Dorsolateral prefrontal cortex (tissue), 120 donors: ENCODE measurements at regions of chr19 and their contacts with region 1.

Region 1: DNA sequence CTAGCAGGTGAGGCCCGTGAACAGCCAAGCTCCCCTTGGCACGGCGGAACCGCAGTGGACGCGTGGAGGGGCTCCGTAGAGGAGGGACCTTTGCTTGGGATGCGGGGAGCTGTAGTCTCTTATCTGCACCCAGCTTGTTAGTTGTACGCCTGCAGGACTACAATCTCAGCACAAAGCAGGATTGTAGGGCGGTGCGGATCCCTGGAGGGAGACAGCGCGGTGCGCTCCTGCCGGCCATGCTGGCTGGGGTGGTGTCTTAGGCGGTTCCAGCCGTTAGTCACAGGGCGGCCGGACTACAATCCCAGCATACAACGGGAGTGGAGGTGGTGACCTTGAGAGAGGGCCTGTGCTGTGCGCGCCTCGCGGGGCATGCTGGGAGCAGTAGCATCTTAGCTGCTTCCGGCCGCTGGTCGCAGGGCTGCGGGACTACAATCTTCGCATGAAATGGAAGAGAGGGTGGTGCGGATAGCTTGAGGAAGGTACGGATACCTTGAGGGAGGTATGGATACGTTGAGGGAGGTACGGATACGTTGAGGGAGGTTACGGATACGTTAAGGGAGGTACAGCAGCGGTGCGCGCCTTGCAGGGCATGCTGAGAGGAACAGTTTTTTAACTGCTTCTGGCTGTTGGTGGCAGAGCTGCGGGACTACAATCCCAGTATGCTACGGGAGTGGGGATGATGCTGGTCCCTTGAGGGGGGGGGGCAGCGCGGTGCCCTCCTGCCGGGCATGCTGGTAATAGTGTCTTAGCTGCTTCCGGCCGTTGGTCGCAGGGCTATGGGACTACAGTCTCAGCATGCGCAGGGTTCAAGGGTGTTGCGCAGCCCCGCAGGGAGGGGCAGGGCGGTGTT is 1419.1 kb downstream of the UQCRFS1 start:
- DNase-seq: peak; percentile 95 to 98 (median 97)
- H3K4me3 ChIP-seq: peak overlapping the region; percentile 56 to 99 (median 82)
- H3K27ac ChIP-seq: peak overlapping the region; percentile 29 to 97 (median 88)
- H3K27me3 ChIP-seq: no peaks in the 10 kb centered on the region
- CTCF ChIP-seq: peak in 29 of 56 donors; percentile 4 to 57 (median 24)

Region 2: DNA sequence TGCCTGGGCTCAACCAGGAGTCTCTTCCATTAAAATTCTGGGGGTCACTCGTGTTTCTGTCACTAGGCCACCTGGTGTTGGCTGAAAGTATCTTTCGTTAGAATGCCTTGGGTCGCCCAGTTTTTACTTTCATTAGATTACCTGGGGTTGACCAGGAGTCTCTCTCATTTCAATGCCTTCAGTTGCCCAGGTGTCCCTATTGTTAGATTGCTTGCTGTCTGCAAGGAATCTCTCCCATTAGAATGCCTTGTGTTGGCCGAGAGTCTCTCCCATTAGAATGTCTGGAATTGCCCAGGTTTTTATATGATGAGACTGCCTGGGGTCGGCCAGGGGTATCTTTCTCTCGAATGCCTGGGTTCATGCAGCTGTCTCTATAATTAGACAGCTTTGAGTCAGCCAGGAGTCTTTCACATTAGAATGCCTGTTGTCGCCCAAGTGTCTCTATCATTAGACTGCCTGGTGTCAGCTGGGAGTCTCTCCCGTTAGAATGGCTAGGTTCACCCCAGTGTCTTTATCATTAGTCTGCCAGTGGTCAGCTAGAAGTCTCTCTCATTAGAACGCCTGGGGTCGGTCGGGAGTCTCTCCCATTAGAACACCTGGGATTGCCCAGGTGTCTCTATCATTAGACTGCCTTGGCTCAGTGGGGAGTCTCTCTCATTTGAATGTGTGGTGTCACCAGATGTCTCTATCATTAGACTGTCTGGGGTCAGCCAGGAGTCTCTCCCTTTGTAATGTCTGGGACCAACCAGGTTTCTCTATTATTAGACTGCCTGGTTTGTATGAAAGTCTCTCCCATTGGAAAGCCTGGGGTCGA is 27.8 kb before region 1 on chr19:
- intact Hi-C with region 1: no loop called
- DNase-seq: no peak
- H3K4me3 ChIP-seq: no peak overlapping the region
- H3K27ac ChIP-seq: no peak overlapping the region
- H3K27me3 ChIP-seq: no peaks in the 10 kb centered on the region
- CTCF ChIP-seq: no peak

Region 3: GRCh38 chr19:27833031-27833430 is 39.2 kb after region 1 on chr19:
- intact Hi-C with region 1: no loop called
- DNase-seq: no peak
- H3K4me3 ChIP-seq: no peak overlapping the region
- H3K27ac ChIP-seq: no peak overlapping the region
- H3K27me3 ChIP-seq: no peaks in the 10 kb centered on the region
- CTCF ChIP-seq: no peak

Region 4: DNA sequence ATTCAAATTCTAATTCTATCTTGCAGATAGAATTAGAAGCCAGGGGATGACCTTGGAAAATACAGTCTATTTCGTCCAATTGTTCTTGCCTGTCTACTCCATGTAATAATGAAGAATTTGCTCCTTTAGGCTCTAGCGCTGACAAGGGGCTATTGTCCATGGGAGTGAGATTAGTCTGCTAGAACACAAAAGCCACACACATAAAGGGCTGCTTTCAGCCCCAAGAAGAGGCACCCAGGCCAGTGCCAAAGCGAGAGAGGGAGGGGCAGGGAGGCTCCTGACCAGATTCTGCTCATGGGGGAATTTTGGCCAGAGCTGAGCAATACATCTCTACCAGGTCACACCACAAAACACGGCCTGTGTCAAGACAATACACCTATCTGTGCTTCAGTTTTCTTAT is 112.2 kb after region 1 on chr19:
- intact Hi-C with region 1: loop called (anchors 2 to 5 kb)
- DNase-seq: peak in 9 of 10 donors; percentile 40 to 74 (median 70)
- H3K4me3 ChIP-seq: no peak overlapping the region
- H3K27ac ChIP-seq: peak overlapping the region in 38 of 59 donors; percentile 2 to 85 (median 44)
- H3K27me3 ChIP-seq: no peaks in the 10 kb centered on the region
- CTCF ChIP-seq: peak in 18 of 56 donors; percentile 5 to 41 (median 18)